Activated T-helper 2 cell treated with anti-CD3 and anti-CD28 coated beads, Interferon-gamma antibody, Interleukin-2, Interleukin-4, amounts not matched to agents 10 μg/mL and 5 μg/mL and 100 μg/mL, durations not matched to agents 14 hours and 24 hours and 36 hours (primary cell): ENCODE measurements at regions of chr2 and their contacts with region 1.

Region 1: DNA sequence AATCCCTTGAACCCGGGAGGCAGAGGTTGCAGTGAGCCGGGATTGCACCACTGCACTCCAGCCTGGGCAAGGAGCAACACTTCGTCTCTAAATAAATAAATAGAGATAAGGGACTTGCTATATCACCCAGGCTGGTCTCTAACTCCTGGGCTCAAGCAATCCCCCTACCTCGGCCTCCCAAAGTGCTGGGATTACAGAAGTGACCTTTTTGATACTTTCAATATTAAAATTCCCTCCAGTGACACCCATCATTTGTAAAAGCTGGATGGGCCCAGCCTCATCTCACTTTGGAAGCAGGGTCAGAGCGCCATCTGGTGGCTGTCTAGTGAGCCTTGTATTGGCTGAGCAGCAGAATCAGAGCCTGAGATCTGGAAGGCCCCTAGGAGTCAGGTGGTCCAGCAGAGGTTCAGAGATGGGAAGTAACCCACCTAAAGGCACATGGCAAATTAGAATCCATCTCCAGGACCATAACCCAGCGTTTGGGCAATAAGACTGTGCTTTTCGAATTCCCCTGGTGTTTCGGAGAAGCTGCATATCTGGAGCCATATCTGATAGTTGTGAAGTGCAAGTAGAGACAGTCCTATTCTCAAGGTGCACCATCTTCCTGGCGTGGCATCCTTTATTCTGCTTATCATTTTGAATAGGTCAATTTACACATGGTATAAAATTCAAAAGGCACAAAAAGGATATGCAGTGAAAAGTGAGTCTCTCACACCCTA is 18.3 kb upstream of the SLC35F6 start:
- DNase-seq: peak; percentile 53
- H3K4me3 Mint-ChIP-seq: no peak overlapping the region
- H3K27ac Mint-ChIP-seq: no peak overlapping the region
- H3K4me1 Mint-ChIP-seq: peaks cover 2% of the 10 kb centered on the region
- H3K27me3 Mint-ChIP-seq: peaks cover 6% of the 10 kb centered on the region

Region 2: GRCh38 chr2:26605195-26605998 is 140.4 kb before region 1 on chr2:
- intact Hi-C with region 1: loop called (anchors 1 kb)
- DNase-seq: no peak
- H3K4me3 Mint-ChIP-seq: no peak overlapping the region
- H3K27ac Mint-ChIP-seq: no peak overlapping the region
- H3K4me1 Mint-ChIP-seq: peaks cover 6% of the 10 kb centered on the region
- H3K27me3 Mint-ChIP-seq: peaks cover 36% of the 10 kb centered on the region